Heart left ventricle (tissue), 16 donors: ENCODE measurements at regions of chr4 and their contacts with region 1.

Region 1: GRCh38 chr4:41214136-41214824 is at the start of gene APBB2:
- DNase-seq: peak; percentile 95 to 98 (median 96)
- ATAC-seq: peak; percentile 92 to 95 (median 94)
- H3K4me3 ChIP-seq: peak within 1 kb of the TSS; percentile 70 to 93 (median 86)
- H3K27ac ChIP-seq: peak within 1 kb of the TSS; percentile 30 to 94 (median 88)
- H3K4me1 ChIP-seq: peaks cover 0 to 57% (median 27%) of the 10 kb centered on the region in 12 donors
- H3K27me3 ChIP-seq: peaks cover 0 to 8% (median 0%) of the 10 kb centered on the region in 9 donors
- CTCF ChIP-seq: peak; percentile 80 to 97 (median 92)
- POLR2A ChIP-seq: peak in 1 of 2 donors; percentile 94
- total RNA-seq, gene APBB2: 19.1 to 39.1 (median 32.1) TPM

Region 2: GRCh38 chr4:40736910-40737309 is 477.4 kb before region 1 on chr4:
- intact Hi-C with region 1: loop called in 1 of 10 experiments (anchors 10 kb)
- DNase-seq: no peak
- ATAC-seq: no peak
- H3K4me3 ChIP-seq: no peak overlapping the region
- H3K27ac ChIP-seq: no peak overlapping the region
- H3K4me1 ChIP-seq: peaks cover 0 to 20% (median 0%) of the 10 kb centered on the region in 12 donors
- H3K27me3 ChIP-seq: peaks cover 0 to 5% (median 0%) of the 10 kb centered on the region in 9 donors
- CTCF ChIP-seq: peak in 8 of 12 donors; percentile 18 to 50 (median 31)
- POLR2A ChIP-seq: no peak

Region 3: DNA sequence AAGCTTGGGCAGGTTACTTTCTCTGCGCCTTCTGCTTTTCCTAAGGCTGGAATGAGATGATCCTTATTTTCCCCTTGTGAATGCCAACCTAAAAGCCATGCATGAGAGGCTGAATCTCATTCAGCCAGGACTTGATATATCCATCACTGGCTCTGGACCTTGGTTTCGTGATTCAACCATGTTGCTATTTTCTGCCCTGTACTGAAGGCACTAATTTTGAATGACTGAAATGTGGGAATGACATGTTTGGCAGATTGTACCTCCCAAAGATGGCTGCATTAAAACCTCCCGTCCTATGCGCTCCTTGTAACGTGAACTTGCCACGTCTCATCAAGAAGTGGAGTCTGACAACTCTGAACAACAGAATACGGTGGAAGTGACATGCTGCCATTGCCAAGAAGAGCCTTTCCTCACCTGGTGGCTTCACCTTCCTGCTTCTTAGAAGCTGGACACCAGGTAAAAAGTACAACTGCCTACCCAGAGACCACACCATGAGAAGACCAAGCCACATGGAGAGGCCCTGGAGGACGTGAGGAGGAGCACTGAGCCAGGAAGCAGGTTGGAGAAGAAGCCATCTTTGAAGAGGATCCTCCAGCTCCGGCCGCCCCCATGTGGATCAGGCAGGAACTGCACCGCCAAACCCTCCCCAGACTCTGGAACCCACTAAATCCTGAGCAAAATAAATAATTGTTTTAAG is 290.0 kb before region 1 on chr4:
- intact Hi-C with region 1: loop called (anchors 1 to 2 kb)
- DNase-seq: peak; percentile 34 to 81 (median 49)
- ATAC-seq: peak; percentile 22 to 62 (median 60)
- H3K4me3 ChIP-seq: no peak overlapping the region
- H3K27ac ChIP-seq: no peak overlapping the region
- H3K4me1 ChIP-seq: peaks cover 0 to 19% (median 0%) of the 10 kb centered on the region in 12 donors
- H3K27me3 ChIP-seq: no peaks in the 10 kb centered on the region
- CTCF ChIP-seq: peak; percentile 66 to 88 (median 81)
- POLR2A ChIP-seq: no peak

Region 4: GRCh38 chr4:40992472-40993295 is 221.6 kb before region 1 on chr4:
- intact Hi-C with region 1: no loop called
- DNase-seq: no peak
- ATAC-seq: peak; percentile 30 to 69 (median 58)
- H3K4me3 ChIP-seq: no peak overlapping the region
- H3K27ac ChIP-seq: peak overlapping the region in 2 of 12 donors; percentile 15 to 47
- H3K4me1 ChIP-seq: peaks cover 0 to 37% (median 12%) of the 10 kb centered on the region in 12 donors
- H3K27me3 ChIP-seq: no peaks in the 10 kb centered on the region
- CTCF ChIP-seq: no peak
- POLR2A ChIP-seq: no peak

Region 5: GRCh38 chr4:41044165-41044564 is 170.1 kb before region 1 on chr4:
- intact Hi-C with region 1: loop called in 1 of 10 experiments (anchors 5 kb)
- DNase-seq: no peak
- ATAC-seq: no peak
- H3K4me3 ChIP-seq: no peak overlapping the region
- H3K27ac ChIP-seq: no peak overlapping the region
- H3K4me1 ChIP-seq: peaks cover 0 to 19% (median 0%) of the 10 kb centered on the region in 12 donors
- H3K27me3 ChIP-seq: no peaks in the 10 kb centered on the region
- CTCF ChIP-seq: peak in 4 of 12 donors; percentile 6 to 32 (median 11)
- POLR2A ChIP-seq: no peak

Region 6: GRCh38 chr4:41057467-41057866 is 156.8 kb before region 1 on chr4:
- intact Hi-C with region 1: loop called in 3 of 10 experiments (anchors 5 kb)
- DNase-seq: no peak
- ATAC-seq: no peak
- H3K4me3 ChIP-seq: no peak overlapping the region
- H3K27ac ChIP-seq: peak overlapping the region in 1 of 12 donors; percentile 8
- H3K4me1 ChIP-seq: peaks cover 0 to 33% (median 16%) of the 10 kb centered on the region in 12 donors
- H3K27me3 ChIP-seq: no peaks in the 10 kb centered on the region
- CTCF ChIP-seq: no peak
- POLR2A ChIP-seq: no peak

Region 7: DNA sequence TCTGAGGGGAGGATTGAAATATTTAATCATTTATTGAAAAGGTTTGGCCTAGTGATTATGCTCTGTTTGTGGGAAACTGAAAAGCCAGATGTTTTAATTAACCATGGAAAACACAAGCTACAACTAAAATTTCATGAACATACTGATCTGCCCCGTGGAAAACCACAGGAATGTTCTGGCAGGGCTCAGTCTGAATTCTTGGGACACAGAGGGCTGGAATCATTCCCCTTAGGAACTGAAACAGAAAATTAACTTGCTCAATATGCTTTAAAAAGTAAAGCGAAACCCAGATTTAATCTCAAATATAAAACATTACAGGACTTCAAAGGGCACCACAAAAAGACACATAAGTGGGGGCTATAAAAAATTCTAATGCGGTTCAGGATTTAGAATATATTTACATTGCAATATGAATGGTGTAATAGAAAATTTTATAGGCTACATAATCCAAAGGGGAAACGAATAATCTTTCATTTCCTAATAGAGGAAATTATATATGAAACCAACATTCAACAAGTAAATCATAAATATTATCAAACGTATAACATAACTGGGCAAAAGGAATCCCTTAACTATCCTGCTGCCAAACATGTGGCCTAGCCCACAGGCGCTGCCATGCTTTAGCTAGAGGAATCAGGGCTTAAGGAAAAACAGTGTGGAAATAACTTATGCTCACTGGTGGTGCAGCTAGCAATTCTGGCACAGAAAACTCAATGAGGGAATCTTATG is 70.8 kb before region 1 on chr4:
- intact Hi-C with region 1: loop called in 3 of 10 experiments (anchors 5 kb)
- DNase-seq: peak in 4 of 5 donors; percentile 40 to 63 (median 56)
- ATAC-seq: peak; percentile 62 to 87 (median 82)
- H3K4me3 ChIP-seq: peak overlapping the region in 4 of 12 donors; percentile 8 to 32 (median 24)
- H3K27ac ChIP-seq: peak overlapping the region; percentile 56 to 89 (median 72)
- H3K4me1 ChIP-seq: peaks cover 0 to 65% (median 36%) of the 10 kb centered on the region in 12 donors
- H3K27me3 ChIP-seq: no peaks in the 10 kb centered on the region
- CTCF ChIP-seq: no peak
- POLR2A ChIP-seq: no peak